Activated CD8-positive, alpha-beta memory T cell treated with anti-CD3 and anti-CD28 coated beads, Interleukin-2, amount 10 ng/mL, durations not matched to agents 7 days and 5 days (primary cell): ENCODE measurements at regions of chr17 and their contacts with region 1.

Region 1: DNA sequence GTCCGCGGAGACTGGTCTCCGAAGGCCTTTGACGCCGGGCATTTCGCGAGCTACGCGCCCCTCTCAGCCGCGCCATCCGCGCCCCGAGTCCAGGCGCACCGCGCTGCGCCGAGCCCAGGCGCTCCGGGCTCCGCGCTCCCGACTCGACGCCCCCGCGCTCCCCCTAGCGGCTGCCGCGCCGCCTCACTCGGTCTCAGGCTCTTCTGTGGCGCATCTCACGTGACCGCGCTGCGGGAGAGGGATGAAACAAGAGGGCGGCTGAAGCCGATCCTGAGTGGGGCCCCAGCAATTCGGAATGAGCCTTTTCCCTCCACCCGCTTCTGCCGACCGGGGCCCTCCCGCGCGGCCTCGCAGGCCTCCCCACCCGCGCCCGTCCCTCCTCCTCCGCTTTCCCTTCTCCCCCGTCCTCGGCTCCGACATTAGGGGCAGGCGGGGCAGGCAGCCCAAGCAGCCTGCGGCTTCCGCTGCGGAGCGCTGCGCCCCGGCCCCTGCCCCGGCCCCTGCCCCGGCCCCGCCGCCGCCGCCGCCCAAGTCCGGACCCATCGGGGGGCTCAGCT is 42.5 kb upstream of the AMZ2 start:
- DNase-seq: peak; percentile 95
- ATAC-seq: peak; percentile 89
- H3K4me3 Mint-ChIP-seq: peak overlapping the region; percentile 86
- H3K27ac Mint-ChIP-seq: peak overlapping the region; percentile 88
- H3K4me1 Mint-ChIP-seq: peaks cover 28% of the 10 kb centered on the region
- H3K27me3 Mint-ChIP-seq: peaks cover 8% of the 10 kb centered on the region

Region 2: GRCh38 chr17:68057531-68057952 is 147.8 kb before region 1 on chr17:
- CTCF ChIA-PET with region 1: interaction called, 10 read pairs
- DNase-seq: peak; percentile 75
- ATAC-seq: peak; percentile 79
- H3K4me3 Mint-ChIP-seq: no peak overlapping the region
- H3K27ac Mint-ChIP-seq: no peak overlapping the region
- H3K4me1 Mint-ChIP-seq: peaks cover 7% of the 10 kb centered on the region
- H3K27me3 Mint-ChIP-seq: peaks cover 6% of the 10 kb centered on the region

Region 3: DNA sequence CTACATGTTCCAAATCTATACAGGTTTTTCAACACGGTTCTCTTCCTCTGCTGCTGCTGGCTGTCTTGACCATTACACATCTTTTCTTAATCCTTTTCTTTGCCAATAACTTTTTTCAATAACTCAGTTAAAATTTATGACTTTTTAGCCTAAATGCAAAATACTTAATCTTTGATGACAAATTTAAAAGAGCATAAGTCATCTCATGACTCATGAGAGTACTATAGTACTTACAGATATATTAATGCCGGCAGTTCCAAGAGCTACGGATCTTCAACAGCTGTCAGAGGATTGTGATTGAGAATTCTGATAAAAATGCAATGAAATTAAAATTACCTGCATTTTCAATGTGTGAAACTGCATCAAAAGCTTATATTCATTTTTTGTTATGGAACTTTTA is 64.3 kb before region 1 on chr17:
- CTCF ChIA-PET with region 1: no interaction called
- DNase-seq: no peak
- ATAC-seq: no peak
- H3K4me3 Mint-ChIP-seq: no peak overlapping the region
- H3K27ac Mint-ChIP-seq: no peak overlapping the region
- H3K4me1 Mint-ChIP-seq: peaks cover 5% of the 10 kb centered on the region
- H3K27me3 Mint-ChIP-seq: no peaks in the 10 kb centered on the region

Region 4: GRCh38 chr17:68179236-68179925 is 25.9 kb before region 1 on chr17:
- CTCF ChIA-PET with region 1: interaction called, 278 read pairs
- DNase-seq: no peak
- ATAC-seq: no peak
- H3K4me3 Mint-ChIP-seq: no peak overlapping the region
- H3K27ac Mint-ChIP-seq: no peak overlapping the region
- H3K4me1 Mint-ChIP-seq: peaks cover 47% of the 10 kb centered on the region
- H3K27me3 Mint-ChIP-seq: no peaks in the 10 kb centered on the region

Region 5: DNA sequence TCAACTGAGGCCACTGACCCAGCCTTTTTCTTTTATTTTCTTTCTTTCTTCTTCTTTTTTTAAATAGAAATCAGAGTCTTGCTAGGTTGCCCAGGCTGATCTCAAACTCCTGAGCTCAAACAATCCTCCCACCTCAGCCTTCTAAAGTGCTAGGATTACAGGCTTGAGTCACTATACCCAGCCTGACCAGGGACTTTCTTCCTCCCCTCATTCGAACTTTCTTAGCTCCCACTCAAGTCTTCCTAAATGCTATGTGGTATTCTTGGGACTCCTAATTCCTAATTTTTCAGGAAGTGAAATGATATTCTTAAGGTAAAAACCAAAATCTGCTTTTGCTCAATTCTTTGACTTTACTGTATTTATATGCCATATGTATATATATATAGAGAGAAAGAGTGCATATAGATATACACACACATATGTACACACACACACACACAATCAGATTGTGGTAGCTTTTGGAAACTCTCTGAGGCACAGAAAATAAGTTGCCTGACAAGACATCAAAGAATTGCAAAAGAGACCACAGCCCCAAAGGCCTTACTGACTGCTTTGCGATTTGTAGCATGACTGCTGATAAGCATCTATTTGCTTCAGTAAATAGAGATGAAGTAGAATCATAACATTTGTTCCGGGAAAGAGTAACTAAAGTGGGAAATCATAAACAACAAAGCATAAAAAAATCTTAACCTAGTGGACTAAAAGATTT is 33.0 kb after region 1 on chr17:
- CTCF ChIA-PET with region 1: interaction called, 20 read pairs
- DNase-seq: no peak
- ATAC-seq: peak; percentile 13
- H3K4me3 Mint-ChIP-seq: peak overlapping the region; percentile 76
- H3K27ac Mint-ChIP-seq: peak overlapping the region; percentile 99
- H3K4me1 Mint-ChIP-seq: peaks cover 64% of the 10 kb centered on the region
- H3K27me3 Mint-ChIP-seq: no peaks in the 10 kb centered on the region

Region 6: GRCh38 chr17:68457539-68458259 is 252.4 kb after region 1 on chr17:
- CTCF ChIA-PET with region 1: interaction called, 12 read pairs
- DNase-seq: peak; percentile 99
- ATAC-seq: peak; percentile 94
- H3K4me3 Mint-ChIP-seq: peak overlapping the region; percentile 75
- H3K27ac Mint-ChIP-seq: peak overlapping the region; percentile 94
- H3K4me1 Mint-ChIP-seq: peaks cover 81% of the 10 kb centered on the region
- H3K27me3 Mint-ChIP-seq: no peaks in the 10 kb centered on the region